ENCODE measurements at regions of chr1 and their contacts with region 1.

Region 1: DNA sequence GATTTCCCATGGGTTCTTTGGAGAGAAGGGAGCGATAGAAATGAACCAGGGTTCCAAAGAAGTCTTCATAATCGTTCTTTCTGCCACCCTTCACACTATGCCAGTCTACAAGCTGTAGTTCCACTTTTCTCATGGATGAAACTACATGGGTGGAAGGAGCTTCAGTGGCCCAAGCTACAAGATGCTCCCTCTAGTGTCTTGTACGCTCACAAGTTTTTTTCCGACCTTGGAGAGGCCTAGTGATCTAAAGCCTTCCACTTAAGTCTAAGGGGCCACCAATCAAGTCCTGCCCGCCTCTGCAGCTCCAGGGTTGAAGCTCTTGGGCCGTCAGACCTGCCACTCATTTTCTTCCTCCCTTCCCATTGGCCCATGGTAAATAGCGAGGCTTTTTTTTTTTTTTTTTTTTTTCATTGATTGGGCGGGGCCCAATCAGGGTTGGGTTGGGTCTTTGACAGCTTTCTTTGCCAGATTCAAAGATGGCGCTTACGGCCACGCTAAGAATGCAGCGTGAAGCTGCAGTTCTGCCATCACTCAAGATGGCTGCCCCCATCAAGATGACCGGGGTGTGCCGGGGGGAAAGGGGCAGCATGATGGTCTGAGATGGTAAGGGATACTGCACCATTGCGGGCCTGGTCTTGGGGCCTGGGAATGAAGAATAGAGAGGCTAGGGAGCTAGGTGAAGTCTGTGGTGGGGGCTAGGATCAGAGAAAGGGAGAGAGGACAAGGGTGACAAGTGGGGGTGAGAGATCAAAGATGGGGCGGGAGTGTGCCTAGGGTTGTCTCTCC is at the start of gene TOMM40L:
- DNase-seq: peak; percentile 91
- H3K4me3 Mint-ChIP-seq: peak within 1 kb of the TSS; percentile 86
- H3K27ac Mint-ChIP-seq: peak within 1 kb of the TSS; percentile 76
- H3K4me1 Mint-ChIP-seq: peaks cover 26% of the 10 kb centered on the region
- H3K27me3 Mint-ChIP-seq: peaks cover 26% of the 10 kb centered on the region
- CTCF ChIP-seq: peak; percentile 38
- total RNA-seq, gene TOMM40L: 14.1 and 15.0 TPM in 2 replicates

Region 2: DNA sequence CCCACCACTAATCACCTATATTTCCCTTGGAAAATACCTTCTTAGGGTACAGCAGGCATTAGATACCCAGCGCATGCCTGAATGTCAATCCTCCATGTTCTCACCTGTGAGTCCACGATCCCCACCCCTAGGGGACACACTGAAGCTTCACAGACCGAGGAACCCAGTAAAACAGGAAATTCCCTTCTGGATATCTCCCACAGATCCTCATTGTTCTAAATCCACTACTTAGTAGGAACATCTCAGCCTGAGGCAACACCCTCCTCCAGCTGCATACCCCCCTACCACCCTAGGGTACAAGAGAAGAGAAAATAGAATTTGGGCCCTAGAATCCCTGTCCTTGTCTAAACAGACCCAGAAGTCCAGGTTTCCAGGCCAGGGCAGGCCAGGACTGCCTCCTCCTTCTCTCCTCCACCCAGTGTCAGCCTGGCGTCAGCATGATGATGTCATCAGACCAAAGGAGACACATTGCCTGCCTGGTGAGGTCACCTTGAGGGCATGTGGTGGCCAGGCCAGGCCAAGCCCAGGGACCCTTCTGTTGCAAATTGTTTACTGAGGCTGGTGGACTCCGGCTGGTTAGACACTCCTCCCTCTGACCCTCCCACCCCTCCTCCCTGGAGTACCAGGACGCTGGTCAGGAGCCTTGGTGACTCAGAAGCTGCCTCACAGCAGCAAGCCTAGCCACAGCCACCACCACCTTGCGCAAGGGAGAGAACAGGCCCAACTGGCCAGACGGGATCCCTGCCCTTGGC is 142.6 kb before region 1 on chr1:
- CTCF ChIA-PET with region 1: no interaction called
- intact Hi-C with region 1: no loop called
- DNase-seq: peak; percentile 99
- H3K4me3 Mint-ChIP-seq: peak overlapping the region; percentile 77
- H3K27ac Mint-ChIP-seq: peak overlapping the region; percentile 25
- H3K4me1 Mint-ChIP-seq: peaks cover 85% of the 10 kb centered on the region
- H3K27me3 Mint-ChIP-seq: no peaks in the 10 kb centered on the region
- CTCF ChIP-seq: no peak

Region 3: DNA sequence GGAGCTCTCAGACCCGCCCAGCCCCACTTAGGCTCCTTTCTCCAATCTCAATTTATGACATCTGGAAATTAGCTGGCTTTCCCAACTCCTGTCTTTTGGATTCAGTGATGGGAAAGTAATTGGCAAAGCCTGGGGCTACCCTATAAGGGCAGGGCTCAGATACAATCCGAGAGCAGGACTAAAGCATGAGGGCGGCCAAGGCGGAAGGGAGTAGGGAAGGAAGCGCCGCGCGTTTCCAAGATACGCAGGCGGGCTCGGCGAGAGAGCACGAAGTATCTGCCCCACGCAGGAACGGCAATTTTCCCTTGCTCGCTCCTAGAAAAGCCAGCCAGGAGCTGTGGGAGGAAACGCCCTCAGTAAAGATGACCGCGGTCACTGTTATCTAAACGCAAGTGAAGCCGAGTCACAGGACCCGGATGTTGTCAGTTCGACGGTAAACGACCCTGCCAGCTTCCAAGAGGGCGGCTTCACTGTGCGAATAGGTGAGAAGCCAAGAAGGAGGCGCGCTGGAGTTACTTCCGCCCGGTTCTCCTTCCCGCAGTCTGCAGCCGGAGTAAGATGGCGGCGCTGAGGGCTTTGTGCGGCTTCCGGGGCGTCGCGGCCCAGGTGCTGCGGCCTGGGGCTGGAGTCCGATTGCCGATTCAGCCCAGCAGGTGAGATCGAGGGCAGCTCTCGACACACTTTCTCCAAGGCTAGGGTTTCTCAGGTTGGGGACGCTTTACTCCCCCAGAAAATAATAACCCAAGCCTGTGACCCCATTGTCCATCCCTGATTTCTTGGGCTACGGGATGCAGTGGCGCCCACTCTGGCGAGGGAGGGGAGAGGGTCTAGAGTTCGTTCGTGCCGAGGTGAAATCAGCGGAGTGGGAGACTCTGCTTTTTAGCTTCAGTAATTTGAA is 23.6 kb before region 1 on chr1 and contains the start of gene NDUFS2:
- CTCF ChIA-PET with region 1: interaction called, 22 read pairs
- intact Hi-C with region 1: no loop called
- DNase-seq: peak; percentile 96
- H3K4me3 Mint-ChIP-seq: peak within 1 kb of the TSS; percentile 78
- H3K27ac Mint-ChIP-seq: peak within 1 kb of the TSS; percentile 71
- H3K4me1 Mint-ChIP-seq: peaks cover 48% of the 10 kb centered on the region
- H3K27me3 Mint-ChIP-seq: peaks cover 24% of the 10 kb centered on the region
- CTCF ChIP-seq: peak; percentile 34
- total RNA-seq, gene NDUFS2: 91.3 and 98.3 TPM in 2 replicates

Region 4: GRCh38 chr1:161209790-161210409 is 15.8 kb before region 1 on chr1:
- CTCF ChIA-PET with region 1: interaction called, 14 read pairs
- intact Hi-C with region 1: loop called (anchors 1 kb)
- DNase-seq: peak; percentile 92
- H3K4me3 Mint-ChIP-seq: no peak overlapping the region
- H3K27ac Mint-ChIP-seq: no peak overlapping the region
- H3K4me1 Mint-ChIP-seq: peaks cover 14% of the 10 kb centered on the region
- H3K27me3 Mint-ChIP-seq: no peaks in the 10 kb centered on the region
- CTCF ChIP-seq: peak; percentile 87

Region 5: GRCh38 chr1:161274874-161275273 is 49.1 kb after region 1 on chr1:
- CTCF ChIA-PET with region 1: no interaction called
- intact Hi-C with region 1: no loop called
- DNase-seq: no peak
- H3K4me3 Mint-ChIP-seq: no peak overlapping the region
- H3K27ac Mint-ChIP-seq: no peak overlapping the region
- H3K4me1 Mint-ChIP-seq: no peaks in the 10 kb centered on the region
- H3K27me3 Mint-ChIP-seq: peaks cover 64% of the 10 kb centered on the region
- CTCF ChIP-seq: no peak

Region 6: DNA sequence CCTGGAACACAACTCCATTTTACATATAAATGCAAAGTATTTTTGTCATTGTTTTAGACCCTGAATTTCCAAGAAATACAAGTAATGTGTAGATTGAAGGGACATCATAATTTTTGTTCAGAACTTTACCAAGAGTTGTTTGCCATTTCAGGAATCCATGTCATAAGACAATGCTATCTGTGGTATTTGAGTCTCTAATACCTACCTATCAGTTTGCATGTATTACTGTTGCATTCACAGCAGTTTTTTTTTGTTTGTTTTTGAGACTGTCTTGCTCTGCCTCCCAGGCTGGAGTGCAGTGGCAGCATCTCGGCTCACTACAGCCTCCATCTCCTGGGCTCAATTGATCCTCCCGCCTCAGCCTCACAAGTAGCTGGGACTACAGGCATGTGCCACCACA is 66.9 kb after region 1 on chr1:
- CTCF ChIA-PET with region 1: interaction called, 24 read pairs
- intact Hi-C with region 1: loop called (anchors 1 kb)
- DNase-seq: no peak
- H3K4me3 Mint-ChIP-seq: no peak overlapping the region
- H3K27ac Mint-ChIP-seq: no peak overlapping the region
- H3K4me1 Mint-ChIP-seq: no peaks in the 10 kb centered on the region
- H3K27me3 Mint-ChIP-seq: peaks cover 29% of the 10 kb centered on the region
- CTCF ChIP-seq: no peak

Region 7: DNA sequence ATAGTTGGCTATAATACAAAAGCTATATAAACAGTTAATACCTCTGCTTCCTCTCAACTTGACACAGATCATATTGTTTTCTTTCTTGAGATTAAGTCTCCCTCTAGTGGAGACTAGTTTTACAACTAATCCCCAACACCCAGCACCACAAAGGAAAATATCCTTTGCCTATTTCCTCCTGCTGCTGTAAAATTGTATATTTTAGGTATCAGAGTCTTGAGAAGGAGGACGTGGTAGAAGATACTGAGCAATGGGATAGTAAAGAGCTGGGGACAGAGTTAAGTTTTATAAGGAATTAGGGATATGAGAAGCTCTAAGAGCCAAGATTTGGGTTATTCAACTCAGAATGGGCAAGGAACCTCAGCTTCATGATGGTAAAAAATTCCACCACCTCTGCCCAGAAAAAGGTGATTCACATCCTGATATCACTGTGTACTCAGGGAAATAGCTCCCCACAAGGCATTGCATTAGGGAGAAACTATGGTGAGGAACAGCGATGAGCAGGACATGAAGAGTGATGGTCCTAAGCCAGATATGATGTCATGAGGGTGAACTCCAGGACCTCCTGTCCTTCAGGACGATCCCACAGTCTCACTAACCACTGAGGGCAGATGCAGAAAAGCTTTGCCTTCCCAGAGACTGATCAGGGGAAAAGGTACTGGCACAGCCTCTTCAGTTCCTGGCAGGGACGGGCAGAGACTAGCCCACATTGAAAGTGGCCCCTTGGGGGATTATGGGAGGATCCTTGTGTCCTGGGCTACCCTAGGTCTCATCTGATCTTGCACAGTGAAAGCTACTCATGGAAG is 156.7 kb after region 1 on chr1:
- CTCF ChIA-PET with region 1: interaction called, 26 read pairs
- intact Hi-C with region 1: loop called (anchors 1 kb)
- DNase-seq: no peak
- H3K4me3 Mint-ChIP-seq: no peak overlapping the region
- H3K27ac Mint-ChIP-seq: no peak overlapping the region
- H3K4me1 Mint-ChIP-seq: peaks cover 9% of the 10 kb centered on the region
- H3K27me3 Mint-ChIP-seq: no peaks in the 10 kb centered on the region
- CTCF ChIP-seq: peak; percentile 50